PC-9 (cell line): ENCODE measurements at regions of chr5 and their contacts with region 1.

Region 1: GRCh38 chr5:44774279-44774880 is 34.4 kb upstream of the MRPS30 start:
- DNase-seq: peak in 1 of 2 experiments; percentile 55
- H3K4me3 ChIP-seq: no peak overlapping the region
- H3K27ac ChIP-seq: no peak overlapping the region
- H3K4me1 ChIP-seq: no peaks in the 10 kb centered on the region
- H3K27me3 ChIP-seq: no peaks in the 10 kb centered on the region
- CTCF ChIP-seq: peak; percentile 92

Region 2: DNA sequence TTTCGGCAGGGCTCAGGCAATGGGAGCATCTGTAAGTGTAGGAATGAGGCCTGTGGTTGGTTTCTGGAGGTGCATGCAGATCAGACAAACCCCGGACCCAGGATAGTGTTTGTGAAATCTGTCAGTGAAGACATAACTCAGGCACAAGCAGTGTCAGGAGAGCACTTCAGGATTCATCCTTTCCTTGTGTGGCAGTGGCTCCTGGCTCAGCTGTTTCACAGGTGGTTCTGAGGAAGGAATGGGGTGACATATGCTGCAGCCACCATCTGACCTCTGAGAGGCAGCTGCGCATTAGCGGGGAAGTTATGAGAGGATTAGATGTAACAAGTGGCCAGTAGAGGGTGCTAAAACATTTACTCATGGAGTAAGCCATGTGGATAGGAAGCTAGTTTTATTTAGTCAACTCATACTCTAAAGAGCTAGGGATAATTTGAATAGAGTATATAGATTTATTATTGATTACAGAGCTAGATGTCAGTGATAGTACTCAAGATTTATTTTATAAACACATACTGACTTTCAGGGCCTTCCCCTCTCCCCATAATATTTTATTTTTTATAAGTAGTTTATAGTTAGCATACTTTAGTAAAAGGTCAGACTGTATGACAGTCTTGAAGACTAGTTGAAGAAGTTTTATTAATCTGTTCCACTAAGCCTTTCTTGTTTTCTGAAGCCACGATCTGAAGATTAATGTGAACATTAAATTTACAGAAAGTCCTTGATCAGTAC is 1143.0 kb before region 1 on chr5:
- CTCF ChIA-PET with region 1: interaction called, 3 read pairs
- POLR2A ChIA-PET with region 1: no interaction called
- intact Hi-C with region 1: loop called (anchors 10 kb)
- DNase-seq: peak; percentile 48 to 74
- H3K4me3 ChIP-seq: no peak overlapping the region
- H3K27ac ChIP-seq: no peak overlapping the region
- H3K4me1 ChIP-seq: no peaks in the 10 kb centered on the region
- H3K27me3 ChIP-seq: no peaks in the 10 kb centered on the region
- CTCF ChIP-seq: peak; percentile 86

Region 3: GRCh38 chr5:43729846-43730478 is 1044.4 kb before region 1 on chr5:
- CTCF ChIA-PET with region 1: no interaction called
- POLR2A ChIA-PET with region 1: no interaction called
- intact Hi-C with region 1: loop called (anchors 2 kb)
- DNase-seq: no peak
- H3K4me3 ChIP-seq: no peak overlapping the region
- H3K27ac ChIP-seq: no peak overlapping the region
- H3K4me1 ChIP-seq: no peaks in the 10 kb centered on the region
- H3K27me3 ChIP-seq: peaks cover 26% of the 10 kb centered on the region; the same call in 1 of the 2 replicates
- CTCF ChIP-seq: peak; percentile 90

Region 4: GRCh38 chr5:44536650-44537260 is 237.6 kb before region 1 on chr5:
- CTCF ChIA-PET with region 1: interaction called, 4 read pairs
- POLR2A ChIA-PET with region 1: no interaction called
- intact Hi-C with region 1: loop called (anchors 1 kb)
- DNase-seq: peak in 1 of 2 experiments; percentile 41
- H3K4me3 ChIP-seq: no peak overlapping the region
- H3K27ac ChIP-seq: no peak overlapping the region
- H3K4me1 ChIP-seq: no peaks in the 10 kb centered on the region
- H3K27me3 ChIP-seq: no peaks in the 10 kb centered on the region
- CTCF ChIP-seq: peak; percentile 94

Region 5: DNA sequence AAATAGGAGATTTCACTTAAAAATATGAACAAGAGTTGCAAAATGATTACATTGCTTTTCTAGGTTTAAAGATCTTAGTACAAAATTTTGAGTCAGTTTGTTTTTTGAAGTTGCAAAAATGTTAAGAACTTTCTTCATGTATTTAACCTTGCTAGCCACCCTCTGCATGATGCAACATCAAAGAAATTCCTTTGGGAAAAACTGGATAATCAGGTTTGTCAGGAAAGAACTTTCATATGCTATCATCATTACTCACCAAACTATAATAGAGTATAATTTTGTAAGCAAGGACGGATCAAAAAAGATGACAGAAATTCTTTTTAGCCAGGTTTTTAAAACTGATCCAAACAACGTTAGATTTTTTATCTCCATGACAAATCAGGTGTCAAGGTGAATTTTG is 82.6 kb before region 1 on chr5:
- CTCF ChIA-PET with region 1: no interaction called
- POLR2A ChIA-PET with region 1: no interaction called
- intact Hi-C with region 1: loop called (anchors 5 kb)
- DNase-seq: peak in 1 of 2 experiments; percentile 87
- H3K4me3 ChIP-seq: peak overlapping the region; percentile 19
- H3K27ac ChIP-seq: peak overlapping the region; percentile 94
- H3K4me1 ChIP-seq: peaks cover 35% of the 10 kb centered on the region
- H3K27me3 ChIP-seq: no peaks in the 10 kb centered on the region
- CTCF ChIP-seq: no peak

Region 6: DNA sequence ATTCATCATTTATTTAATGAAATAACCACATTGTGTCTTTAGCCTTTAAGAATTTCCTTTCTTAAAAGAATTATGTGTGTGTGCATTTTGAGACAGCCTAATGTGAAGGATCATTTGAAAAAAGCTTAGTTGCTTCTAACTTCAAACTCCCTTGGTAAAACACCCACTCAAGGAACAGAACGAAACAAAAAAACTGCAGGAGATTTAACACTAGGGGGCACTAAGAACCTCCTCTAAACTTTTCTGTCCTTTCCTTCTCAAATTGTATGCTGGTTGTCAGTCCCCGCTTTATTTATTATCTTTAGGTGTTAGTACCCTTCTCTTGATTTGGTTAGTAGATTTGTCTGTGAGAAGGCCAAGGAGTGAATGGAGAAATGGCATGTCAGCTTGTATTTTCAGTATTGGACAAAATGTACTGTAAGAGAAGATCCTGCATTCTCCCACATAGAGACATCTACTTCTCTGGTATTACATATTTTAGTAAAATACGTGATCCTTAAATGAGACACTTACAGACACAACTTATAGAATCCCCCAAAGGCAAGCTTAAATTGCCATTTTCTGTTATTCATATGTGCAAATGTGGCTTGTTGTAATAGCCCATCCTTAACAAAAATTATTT is 264.1 kb after region 1 on chr5:
- CTCF ChIA-PET with region 1: no interaction called
- POLR2A ChIA-PET with region 1: no interaction called
- intact Hi-C with region 1: no loop called
- DNase-seq: peak in 1 of 2 experiments; percentile 12
- H3K4me3 ChIP-seq: no peak overlapping the region
- H3K27ac ChIP-seq: no peak overlapping the region
- H3K4me1 ChIP-seq: no peaks in the 10 kb centered on the region
- H3K27me3 ChIP-seq: no peaks in the 10 kb centered on the region
- CTCF ChIP-seq: peak; percentile 86